GM12878 (cell line): ENCODE measurements at regions of chr15 and their contacts with region 1.

Region 1: DNA sequence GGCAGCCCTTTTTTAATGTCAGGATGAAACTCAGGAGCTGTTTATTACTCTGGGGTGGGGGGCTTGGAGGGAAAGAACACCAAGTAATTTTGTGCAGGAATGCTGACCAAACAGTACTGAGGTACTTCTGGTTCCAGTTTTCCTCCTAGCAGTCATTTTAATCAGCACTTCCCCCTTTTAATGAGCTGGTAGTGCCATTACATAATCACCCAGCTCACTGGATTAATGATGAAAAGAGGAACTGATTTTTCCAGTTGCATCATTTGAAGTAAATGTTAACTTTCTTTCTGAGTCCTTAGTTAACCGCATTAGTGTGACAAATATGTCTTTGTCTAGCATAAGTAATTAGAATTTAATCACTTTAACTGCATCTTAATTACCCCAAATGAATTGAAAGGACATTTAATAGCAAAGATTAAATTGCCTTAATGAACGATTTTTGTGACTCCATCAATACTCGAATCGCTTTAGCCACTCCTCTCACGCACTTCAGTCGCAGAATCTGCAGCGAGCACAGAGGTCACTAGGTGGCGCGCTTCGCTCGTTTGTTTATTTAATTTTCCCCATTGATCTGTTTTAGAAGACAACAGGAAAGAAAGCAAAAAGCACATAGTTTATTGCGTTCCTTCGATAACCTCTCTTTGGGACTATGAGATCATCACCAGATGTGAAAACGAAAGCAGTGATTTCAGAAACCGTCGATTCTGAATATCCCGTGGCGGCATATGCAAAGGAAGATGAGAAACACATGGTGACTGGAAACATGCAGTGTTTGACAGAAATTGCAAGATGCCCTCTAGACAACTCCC is 9.8 kb downstream of the ONECUT1 start:
- DNase-seq: peak; percentile 39
- ATAC-seq: peak; percentile 77
- H3K4me3 ChIP-seq: no peak overlapping the region; the same call in 1 of the 2 replicates
- H3K27ac ChIP-seq: no peak overlapping the region
- H3K4me1 ChIP-seq: peaks cover 9% of the 10 kb centered on the region
- H3K27me3 ChIP-seq: peaks cover 13 to 17% of the 10 kb centered on the region in 2 experiments
- CTCF ChIP-seq: peak; percentile 82 to 97 (median 85)
- EP300 ChIP-seq: peak; percentile 85 to 97
- POLR2A ChIP-seq: no peak
- RAD21 ChIP-seq: peak; percentile 80

Region 2: DNA sequence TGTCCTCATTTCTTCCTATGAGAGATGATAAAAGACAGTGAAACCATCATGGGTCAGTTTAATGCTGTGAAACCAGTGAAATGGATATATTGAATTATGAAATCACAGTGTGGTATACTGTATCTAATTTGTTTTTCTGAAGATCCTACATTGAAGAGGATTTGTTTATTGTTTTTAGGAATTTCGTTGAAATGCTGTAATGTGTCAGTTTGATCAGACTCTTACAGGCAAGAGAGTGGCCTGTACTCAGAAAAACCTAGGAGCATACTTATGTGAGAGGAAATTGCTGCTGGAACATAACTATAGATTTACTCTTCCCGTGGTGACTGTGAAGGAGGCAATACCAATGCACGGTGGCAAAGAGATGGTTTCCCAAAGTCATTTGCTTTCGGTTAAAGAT is 38.9 kb after region 1 on chr15:
- CTCF ChIA-PET with region 1: no interaction called
- POLR2A ChIA-PET with region 1: no interaction called
- RAD21 ChIA-PET with region 1: no interaction called
- SMC1A ChIA-PET with region 1: no interaction called
- in situ Hi-C with region 1: no loop called
- intact Hi-C with region 1: no loop called
- DNase-seq: no peak
- ATAC-seq: no peak
- H3K4me3 ChIP-seq: no peak overlapping the region
- H3K27ac ChIP-seq: no peak overlapping the region
- H3K4me1 ChIP-seq: no peaks in the 10 kb centered on the region
- H3K27me3 ChIP-seq: no peaks in the 10 kb centered on the region
- CTCF ChIP-seq: no peak
- EP300 ChIP-seq: no peak
- POLR2A ChIP-seq: no peak
- RAD21 ChIP-seq: no peak

Region 3: GRCh38 chr15:52879904-52880303 is 99.5 kb after region 1 on chr15:
- CTCF ChIA-PET with region 1: no interaction called
- POLR2A ChIA-PET with region 1: no interaction called
- RAD21 ChIA-PET with region 1: no interaction called
- SMC1A ChIA-PET with region 1: no interaction called
- in situ Hi-C with region 1: no loop called
- intact Hi-C with region 1: no loop called
- DNase-seq: no peak
- ATAC-seq: no peak
- H3K4me3 ChIP-seq: no peak overlapping the region
- H3K27ac ChIP-seq: no peak overlapping the region
- H3K4me1 ChIP-seq: no peaks in the 10 kb centered on the region
- H3K27me3 ChIP-seq: no peaks in the 10 kb centered on the region; a peak in 1 of 4 replicates
- CTCF ChIP-seq: no peak
- EP300 ChIP-seq: no peak
- POLR2A ChIP-seq: no peak
- RAD21 ChIP-seq: no peak

Region 4: DNA sequence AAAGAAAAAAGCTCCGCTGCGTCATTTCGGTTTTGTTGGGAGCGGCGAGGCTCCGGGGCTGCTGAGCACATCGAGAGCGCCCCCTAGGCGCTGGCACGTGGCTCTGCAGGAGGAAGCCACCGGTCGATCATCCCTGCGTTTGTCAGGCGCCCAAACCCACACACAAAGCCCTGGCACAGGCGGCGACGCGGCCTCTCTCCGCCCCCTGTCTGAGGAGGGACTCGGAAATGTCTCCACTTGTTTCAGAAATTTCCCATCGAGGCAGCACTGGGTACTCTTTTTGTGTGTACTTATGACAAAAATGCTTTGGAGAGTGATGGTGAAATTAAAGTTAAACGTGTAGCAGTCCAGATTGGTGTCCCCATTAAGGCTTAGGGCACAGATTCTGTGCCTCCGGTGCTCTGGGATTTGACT is 417.1 kb after region 1 on chr15:
- CTCF ChIA-PET with region 1: interaction called, 4 read pairs
- POLR2A ChIA-PET with region 1: no interaction called
- RAD21 ChIA-PET with region 1: no interaction called
- SMC1A ChIA-PET with region 1: interaction called, 4 read pairs
- in situ Hi-C with region 1: loop called (anchors 5 kb)
- intact Hi-C with region 1: loop called (anchors 2 kb)
- DNase-seq: no peak
- ATAC-seq: peak; percentile 91
- H3K4me3 ChIP-seq: no peak overlapping the region
- H3K27ac ChIP-seq: no peak overlapping the region
- H3K4me1 ChIP-seq: no peaks in the 10 kb centered on the region
- H3K27me3 ChIP-seq: no peaks in the 10 kb centered on the region
- CTCF ChIP-seq: peak; percentile 75 to 95 (median 79)
- EP300 ChIP-seq: no peak
- POLR2A ChIP-seq: no peak
- RAD21 ChIP-seq: peak; percentile 55; the same call in 1 of the 2 replicates

Region 5: GRCh38 chr15:53586799-53587198 is 806.4 kb after region 1 on chr15:
- CTCF ChIA-PET with region 1: no interaction called
- POLR2A ChIA-PET with region 1: no interaction called
- RAD21 ChIA-PET with region 1: no interaction called
- SMC1A ChIA-PET with region 1: no interaction called
- in situ Hi-C with region 1: no loop called
- intact Hi-C with region 1: loop called (anchors 2 kb)
- DNase-seq: no peak
- ATAC-seq: peak; percentile 78
- H3K4me3 ChIP-seq: no peak overlapping the region
- H3K27ac ChIP-seq: no peak overlapping the region
- H3K4me1 ChIP-seq: no peaks in the 10 kb centered on the region
- H3K27me3 ChIP-seq: no peaks in the 10 kb centered on the region
- CTCF ChIP-seq: peak; percentile 36 to 48 (median 44)
- EP300 ChIP-seq: no peak
- POLR2A ChIP-seq: no peak
- RAD21 ChIP-seq: peak; percentile 35; the same call in 1 of the 2 replicates

Region 6: DNA sequence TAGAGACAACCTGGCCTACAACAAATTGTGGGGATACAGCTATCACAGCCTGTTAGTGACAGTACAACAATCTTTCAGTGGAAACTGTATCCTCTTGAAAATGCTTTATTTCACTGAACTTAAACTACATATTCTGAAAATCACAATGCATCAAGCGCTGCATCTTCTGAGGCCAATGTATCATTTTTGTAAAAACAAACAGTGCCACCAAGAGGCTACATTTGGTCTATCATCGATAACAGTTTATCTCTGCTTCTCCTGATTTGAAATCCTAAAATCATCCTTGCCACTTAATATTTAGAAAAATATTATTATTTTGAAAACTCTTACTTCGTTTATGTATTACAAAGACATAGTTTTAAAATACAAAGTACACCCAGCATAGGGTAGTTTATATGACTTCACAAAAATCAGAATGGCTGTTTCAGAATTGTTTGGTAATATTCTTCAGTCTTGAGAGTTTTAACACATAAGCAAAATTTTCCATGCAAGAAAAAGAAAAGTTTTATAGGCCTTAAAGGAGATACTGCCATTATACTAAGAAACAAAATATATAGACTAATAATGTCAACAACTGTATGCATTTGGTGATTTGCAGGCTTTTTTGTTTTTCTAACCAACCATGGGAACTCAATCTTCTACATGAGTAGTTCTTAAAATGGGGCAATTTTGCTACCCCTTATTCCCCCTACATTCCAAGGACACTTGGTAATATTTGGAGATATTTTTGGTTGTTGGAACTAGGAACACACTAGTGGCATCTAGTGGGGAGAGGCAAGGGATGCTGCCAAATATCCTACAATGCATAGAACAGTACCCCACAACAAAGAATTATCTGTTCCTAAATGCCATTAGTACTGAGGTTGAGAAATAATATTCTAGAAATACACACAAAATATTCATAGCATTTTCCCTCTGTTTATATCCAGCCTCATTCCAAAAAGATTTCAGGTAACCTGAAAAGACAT is 936.8 kb after region 1 on chr15:
- CTCF ChIA-PET with region 1: interaction called, 7 read pairs
- POLR2A ChIA-PET with region 1: no interaction called
- RAD21 ChIA-PET with region 1: no interaction called
- SMC1A ChIA-PET with region 1: interaction called, 3 read pairs
- in situ Hi-C with region 1: loop called (anchors 10 kb)
- intact Hi-C with region 1: loop called (anchors 2 kb)
- DNase-seq: no peak
- ATAC-seq: peak; percentile 41; the same call in 1 of the 3 replicates
- H3K4me3 ChIP-seq: no peak overlapping the region
- H3K27ac ChIP-seq: no peak overlapping the region
- H3K4me1 ChIP-seq: no peaks in the 10 kb centered on the region
- H3K27me3 ChIP-seq: no peaks in the 10 kb centered on the region
- CTCF ChIP-seq: peak; percentile 16 to 35 (median 22); a peak in 3 of 6 replicates
- EP300 ChIP-seq: no peak
- POLR2A ChIP-seq: no peak
- RAD21 ChIP-seq: peak; percentile 33